ENCODE measurements at regions of chr14 and their contacts with region 1.

Region 1: DNA sequence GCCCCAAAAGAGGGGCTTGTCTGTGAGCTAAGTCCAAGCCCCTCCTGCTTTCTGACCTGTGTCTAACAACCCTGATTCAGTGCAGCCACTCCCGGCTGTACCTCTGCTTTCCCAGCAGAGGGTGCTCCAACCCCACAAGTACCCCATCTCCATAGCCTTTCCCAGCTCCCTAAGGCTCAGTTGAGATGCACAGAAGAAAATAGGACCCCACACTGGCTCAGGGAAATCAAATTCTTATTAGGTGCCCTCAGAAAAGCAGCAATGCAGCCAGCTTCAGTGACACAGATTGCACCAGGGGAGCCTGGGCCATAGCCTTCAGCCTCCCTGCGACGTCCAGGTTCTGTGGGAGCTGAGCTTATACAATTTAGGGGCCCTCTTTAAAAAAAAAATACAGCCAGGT is 49.9 kb downstream of the LRRC74A start:
- DNase-seq: peak in 4 of 5 donors; percentile 41 to 50 (median 44)
- H3K4me3 ChIP-seq: no peak overlapping the region
- H3K4me3 Mint-ChIP-seq: no peak overlapping the region
- H3K27ac ChIP-seq: no peak overlapping the region
- H3K27ac Mint-ChIP-seq: peak overlapping the region in 2 of 7 donors; percentile 10 to 31
- H3K4me1 ChIP-seq: no peaks in the 10 kb centered on the region
- H3K4me1 Mint-ChIP-seq: no peaks in the 10 kb centered on the region
- H3K27me3 ChIP-seq: no peaks in the 10 kb centered on the region
- H3K27me3 Mint-ChIP-seq: peaks cover 0 to 3% of the 10 kb centered on the region in 2 donors

Region 2: GRCh38 chr14:76887196-76887595 is 11.1 kb after region 1 on chr14:
- CTCF ChIA-PET with region 1: interaction called, 72 read pairs
- POLR2A ChIA-PET with region 1: interaction called, 3 read pairs
- intact Hi-C with region 1: no loop called
- DNase-seq: no peak
- H3K4me3 ChIP-seq: no peak overlapping the region
- H3K4me3 Mint-ChIP-seq: no peak overlapping the region
- H3K27ac ChIP-seq: no peak overlapping the region
- H3K27ac Mint-ChIP-seq: no peak overlapping the region
- H3K4me1 ChIP-seq: no peaks in the 10 kb centered on the region
- H3K4me1 Mint-ChIP-seq: peaks cover 0 to 2% (median 0%) of the 10 kb centered on the region in 4 donors
- H3K27me3 ChIP-seq: no peaks in the 10 kb centered on the region
- H3K27me3 Mint-ChIP-seq: peaks cover 1 to 6% of the 10 kb centered on the region in 2 donors

Region 3: DNA sequence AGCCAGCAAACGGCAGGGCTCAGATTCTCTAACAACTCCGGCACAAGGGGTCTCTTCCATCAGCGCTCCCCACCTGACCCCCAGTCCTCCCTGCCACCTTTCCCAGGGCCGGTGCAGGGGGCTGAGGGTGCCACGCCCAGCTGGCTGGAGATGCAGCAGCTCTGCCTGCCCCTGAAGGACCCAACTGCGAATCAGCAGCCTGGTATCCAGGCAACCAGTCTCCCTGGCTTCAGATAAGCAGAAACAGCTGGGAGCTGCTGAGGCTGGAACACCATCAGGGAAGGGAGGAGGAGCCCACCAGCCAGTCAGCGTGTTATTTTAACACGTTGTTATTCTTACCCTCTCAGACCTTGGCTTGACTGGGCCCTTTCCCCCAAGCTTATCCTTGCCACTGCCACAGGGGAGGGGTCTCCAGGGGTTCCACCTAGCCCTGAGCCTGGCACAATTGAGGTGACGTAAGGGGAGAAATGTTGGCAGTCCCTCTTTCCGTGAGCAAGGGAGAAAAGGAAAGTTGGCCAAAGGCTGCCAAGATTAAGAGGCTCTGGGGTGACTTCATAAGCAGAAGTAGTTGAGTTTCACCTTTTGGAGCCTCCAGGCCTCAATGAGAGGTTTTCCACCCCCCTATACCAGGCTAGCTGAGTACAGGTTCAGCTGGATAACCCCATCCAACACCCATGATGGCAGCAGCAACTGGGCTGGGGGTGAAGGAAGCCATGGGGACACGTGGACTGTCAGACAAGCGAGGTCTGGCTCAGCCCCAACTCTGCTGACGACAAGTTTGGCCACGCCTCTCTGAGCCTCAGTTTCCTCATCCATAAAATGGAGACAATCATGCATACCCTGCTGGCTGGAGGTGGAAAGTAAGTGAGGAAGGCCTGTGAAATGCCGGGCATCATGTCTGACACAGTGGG is 61.4 kb after region 1 on chr14:
- CTCF ChIA-PET with region 1: interaction called, 16 read pairs
- POLR2A ChIA-PET with region 1: interaction called, 4 read pairs
- intact Hi-C with region 1: no loop called
- DNase-seq: no peak
- H3K4me3 ChIP-seq: no peak overlapping the region
- H3K4me3 Mint-ChIP-seq: no peak overlapping the region
- H3K27ac ChIP-seq: no peak overlapping the region
- H3K27ac Mint-ChIP-seq: peak overlapping the region in 1 of 7 donors; percentile 48
- H3K4me1 ChIP-seq: peaks cover 4% of the 10 kb centered on the region
- H3K4me1 Mint-ChIP-seq: peaks cover 13 to 23% (median 15%) of the 10 kb centered on the region in 4 donors
- H3K27me3 ChIP-seq: no peaks in the 10 kb centered on the region
- H3K27me3 Mint-ChIP-seq: no peaks in the 10 kb centered on the region

Region 4: DNA sequence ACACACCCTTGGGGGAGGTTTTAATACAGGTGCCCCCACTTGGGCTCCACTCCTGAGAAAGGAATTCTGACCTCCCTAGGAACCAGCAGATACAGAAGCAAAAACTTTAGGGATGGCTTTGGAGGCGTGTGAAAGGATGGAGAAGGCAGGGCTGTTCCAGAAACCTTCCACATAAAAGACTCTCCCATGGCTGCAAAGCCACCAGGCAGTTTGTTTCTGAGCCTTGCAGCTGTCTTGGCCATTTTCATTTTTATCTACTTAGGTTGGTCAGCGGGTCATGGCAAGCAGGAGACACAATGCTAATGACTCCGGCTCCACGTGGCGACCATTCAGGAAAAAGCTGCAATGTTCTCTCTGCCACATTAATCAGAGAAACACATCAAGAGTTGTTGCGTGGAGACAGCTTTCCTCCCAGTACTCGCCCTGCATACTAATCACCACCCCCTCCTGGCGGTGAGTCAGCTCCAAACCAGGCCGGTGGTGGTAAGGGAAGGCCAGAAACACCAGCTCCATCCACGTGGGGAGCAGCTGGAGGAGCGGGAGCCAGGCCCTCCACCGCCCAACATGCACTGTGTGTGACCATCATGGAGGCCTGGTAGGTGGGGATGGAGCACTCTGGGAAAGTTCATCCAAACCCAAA is 183.3 kb after region 1 on chr14:
- CTCF ChIA-PET with region 1: interaction called, 628 read pairs
- POLR2A ChIA-PET with region 1: interaction called, 3 read pairs
- intact Hi-C with region 1: no loop called
- DNase-seq: peak in 3 of 5 donors; percentile 17 to 51 (median 47)
- H3K4me3 ChIP-seq: no peak overlapping the region
- H3K4me3 Mint-ChIP-seq: no peak overlapping the region
- H3K27ac ChIP-seq: no peak overlapping the region
- H3K27ac Mint-ChIP-seq: peak overlapping the region in 2 of 7 donors; percentile 10 to 50
- H3K4me1 ChIP-seq: peaks cover 19% of the 10 kb centered on the region
- H3K4me1 Mint-ChIP-seq: peaks cover 11 to 19% (median 15%) of the 10 kb centered on the region in 4 donors
- H3K27me3 ChIP-seq: no peaks in the 10 kb centered on the region
- H3K27me3 Mint-ChIP-seq: no peaks in the 10 kb centered on the region

Region 5: DNA sequence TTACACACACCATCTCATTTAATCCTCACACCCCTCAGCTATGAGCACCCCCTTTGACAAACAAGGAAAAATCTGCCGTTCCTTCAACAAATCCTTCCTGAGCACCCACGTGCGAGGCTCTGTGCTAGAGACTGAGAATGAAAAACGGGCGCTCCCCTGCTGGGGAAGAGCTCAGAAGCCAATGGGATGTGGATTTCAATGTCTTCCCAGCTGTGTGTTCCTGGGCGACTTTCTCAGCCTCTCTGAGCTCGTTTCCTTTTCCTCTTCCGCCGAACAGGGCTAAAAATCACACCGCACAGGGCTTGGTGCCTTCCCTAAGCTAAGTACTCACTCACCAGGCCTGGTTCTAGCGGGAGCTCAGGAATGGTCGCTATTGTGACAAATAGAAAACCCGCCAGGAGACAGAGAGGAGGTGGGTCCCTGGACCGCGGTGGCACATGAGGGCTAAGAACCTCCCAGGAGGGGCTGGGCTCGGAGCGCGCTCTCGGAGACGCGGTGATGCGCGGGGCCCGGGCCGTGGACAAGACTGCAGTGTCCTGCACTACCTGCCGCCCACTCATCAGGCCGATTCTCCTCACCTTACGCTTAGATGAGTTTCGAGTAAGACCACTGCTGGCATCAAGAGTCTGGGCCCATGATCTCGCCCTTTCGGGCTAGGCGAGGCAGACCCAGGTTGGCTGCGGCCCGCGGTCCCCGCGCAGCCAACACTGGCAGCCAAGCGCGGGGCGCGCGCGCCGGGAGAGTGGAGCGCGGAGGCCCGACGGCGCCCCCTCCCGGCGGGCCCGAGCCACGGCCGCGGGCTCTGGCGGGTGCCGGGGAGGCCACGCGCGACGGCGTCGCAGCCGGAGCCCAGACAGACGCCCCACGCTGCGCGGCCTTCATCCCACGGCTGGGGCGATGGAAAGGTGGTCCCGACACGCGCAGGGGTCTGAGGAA is 248.5 kb after region 1 on chr14:
- CTCF ChIA-PET with region 1: interaction called, 57 read pairs
- POLR2A ChIA-PET with region 1: no interaction called
- intact Hi-C with region 1: loop called (anchors 1 kb)
- DNase-seq: peak; percentile 72 to 83 (median 79)
- H3K4me3 ChIP-seq: peak overlapping the region; percentile 66 to 82
- H3K4me3 Mint-ChIP-seq: peak overlapping the region; percentile 85 to 92 (median 88)
- H3K27ac ChIP-seq: peak overlapping the region; percentile 45
- H3K27ac Mint-ChIP-seq: peak overlapping the region; percentile 50 to 95 (median 91)
- H3K4me1 ChIP-seq: peaks cover 57% of the 10 kb centered on the region
- H3K4me1 Mint-ChIP-seq: peaks cover 17 to 59% (median 45%) of the 10 kb centered on the region in 4 donors
- H3K27me3 ChIP-seq: no peaks in the 10 kb centered on the region
- H3K27me3 Mint-ChIP-seq: peaks cover 6 to 13% of the 10 kb centered on the region in 2 donors